ENCODE measurements at regions of chr17 and their contacts with region 1.

Region 1: GRCh38 chr17:83055911-83056582 is 23.4 kb upstream of the METRNL start:
- DNase-seq: peak; percentile 33 to 55 (median 51)
- ATAC-seq: peak in 2 of 4 donors; percentile 19 to 32
- H3K4me3 ChIP-seq: no peak overlapping the region
- H3K27ac ChIP-seq: peak overlapping the region in 9 of 12 donors; percentile 14 to 73 (median 39)
- H3K4me1 ChIP-seq: peaks cover 0 to 43% (median 25%) of the 10 kb centered on the region in 12 donors
- H3K27me3 ChIP-seq: no peaks in the 10 kb centered on the region
- CTCF ChIP-seq: no peak
- POLR2A ChIP-seq: no peak

Region 2: DNA sequence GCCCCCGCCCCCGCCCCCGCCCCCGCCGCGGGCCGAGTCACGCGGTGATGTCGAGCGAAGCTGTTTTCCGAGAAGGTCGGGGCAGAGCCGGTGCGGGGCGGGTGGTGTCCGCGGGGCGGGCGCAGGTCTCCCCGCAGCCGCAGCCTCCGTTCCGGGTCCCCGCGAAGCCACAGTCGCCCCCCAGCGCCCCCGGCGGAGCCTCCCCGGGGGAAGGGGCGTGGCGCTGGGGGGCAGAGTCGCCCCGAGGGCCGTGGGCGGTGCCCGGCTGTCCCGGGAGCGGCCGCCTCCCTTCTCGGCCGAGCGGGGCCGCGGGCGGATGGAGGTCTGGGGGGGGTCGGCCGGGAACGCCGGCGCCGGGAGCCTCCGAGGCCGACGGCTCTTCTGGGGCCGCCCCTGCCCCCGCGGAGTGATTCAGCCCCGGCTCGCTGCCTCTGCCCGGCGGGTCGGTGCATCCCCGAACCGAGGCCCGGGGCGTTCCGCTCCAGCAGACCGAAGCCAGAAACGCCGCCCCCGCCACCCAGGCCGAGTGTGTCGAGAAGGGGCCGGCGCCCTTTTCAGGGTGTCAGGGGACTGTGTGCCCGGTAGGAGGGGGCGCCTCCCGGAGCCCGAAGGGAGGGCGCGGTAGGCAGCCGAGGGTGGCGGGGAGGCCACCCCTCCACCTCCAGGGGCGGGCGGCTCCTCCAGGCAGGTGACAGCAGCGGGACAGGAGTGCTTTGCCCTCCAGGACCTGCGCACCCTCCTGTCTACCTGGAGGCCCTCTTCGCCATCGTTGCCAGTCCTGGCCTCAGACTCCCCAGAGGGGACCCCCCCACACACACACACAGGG is 25.0 kb after region 1 on chr17:
- intact Hi-C with region 1: loop called in 1 of 10 experiments (anchors 2 kb)
- DNase-seq: peak in 2 of 5 donors; percentile 55 to 76
- ATAC-seq: peak in 3 of 4 donors; percentile 10 to 26 (median 21)
- H3K4me3 ChIP-seq: peak overlapping the region; percentile 48 to 98 (median 73)
- H3K27ac ChIP-seq: peak overlapping the region; percentile 58 to 96 (median 88)
- H3K4me1 ChIP-seq: peaks cover 0 to 71% (median 46%) of the 10 kb centered on the region in 12 donors
- H3K27me3 ChIP-seq: no peaks in the 10 kb centered on the region
- CTCF ChIP-seq: no peak
- POLR2A ChIP-seq: no peak

Region 3: DNA sequence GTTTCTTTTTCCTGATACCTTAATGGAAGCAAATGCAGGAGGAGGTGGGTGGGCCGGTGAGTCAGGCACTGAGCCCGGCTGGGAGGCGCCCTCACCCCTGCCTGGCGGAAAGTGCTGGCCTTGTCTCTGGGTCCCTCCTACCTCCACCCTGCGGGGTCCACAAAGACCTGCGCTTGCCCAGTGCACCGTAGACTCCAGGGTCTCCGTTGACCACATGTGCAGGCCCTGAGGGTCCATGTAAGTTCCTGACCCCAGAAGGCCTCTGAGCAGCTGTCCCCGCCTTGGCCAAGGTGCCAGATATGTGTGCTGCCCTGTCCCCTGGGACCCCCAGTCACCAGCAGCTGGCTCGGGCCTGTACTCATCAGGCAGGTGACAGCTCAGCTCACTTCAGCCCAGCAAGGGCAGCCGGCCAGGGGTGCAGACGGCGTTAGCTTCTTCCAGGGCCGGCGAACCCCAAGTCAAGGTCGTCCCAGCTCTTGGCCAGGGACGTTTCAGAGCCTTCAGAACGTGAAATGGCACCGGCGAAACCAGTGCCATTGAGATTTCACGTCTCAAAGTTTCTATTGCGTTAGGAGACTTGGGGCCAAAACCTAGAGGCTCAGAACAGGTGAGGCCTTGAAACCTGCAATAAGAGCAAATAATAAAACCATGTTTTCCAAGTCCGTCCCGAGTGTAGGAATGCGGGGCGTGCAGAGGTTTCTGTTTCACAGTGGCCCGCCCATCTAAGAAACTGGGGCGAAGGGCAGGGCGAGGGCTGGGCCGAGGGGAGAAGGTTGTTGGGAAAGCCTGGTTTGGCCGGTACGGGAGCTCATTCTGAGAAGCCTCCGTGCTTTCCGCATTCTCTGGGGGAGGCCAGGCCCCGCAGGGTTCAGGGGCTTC is 35.5 kb after region 1 on chr17:
- intact Hi-C with region 1: no loop called
- DNase-seq: peak in 2 of 5 donors; percentile 67 to 76
- ATAC-seq: peak; percentile 28 to 57 (median 50)
- H3K4me3 ChIP-seq: no peak overlapping the region
- H3K27ac ChIP-seq: peak overlapping the region; percentile 6 to 88 (median 68)
- H3K4me1 ChIP-seq: peaks cover 0 to 66% (median 40%) of the 10 kb centered on the region in 12 donors
- H3K27me3 ChIP-seq: no peaks in the 10 kb centered on the region
- CTCF ChIP-seq: no peak
- POLR2A ChIP-seq: no peak